Activated CD4-positive, alpha-beta memory T cell treated with anti-CD3 and anti-CD28 coated beads for 36 hours (primary cell): ENCODE measurements at regions of chr17 and their contacts with region 1.

Region 1: DNA sequence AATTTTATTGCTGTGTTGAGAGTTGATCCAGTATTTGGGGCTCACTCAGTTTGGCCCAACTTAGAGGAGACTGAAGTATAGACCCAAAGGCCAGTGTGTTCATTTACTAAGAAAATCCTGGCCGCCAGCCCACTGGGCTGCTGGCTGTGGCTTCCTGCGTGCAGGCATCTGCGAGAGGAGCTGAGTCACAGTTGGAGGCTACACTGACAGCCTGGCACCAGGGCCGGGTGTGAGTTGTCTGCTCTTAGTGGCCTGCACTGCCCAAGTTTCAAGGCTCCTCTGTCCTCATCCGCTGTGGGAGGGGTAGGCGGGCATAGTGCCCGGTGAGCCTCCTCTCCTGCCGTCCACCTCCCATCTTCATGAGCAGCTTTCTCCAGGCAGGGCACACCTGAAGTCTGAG is 54.2 kb downstream of the PLD6 start:
- DNase-seq: peak; percentile 66
- H3K4me3 Mint-ChIP-seq: no peak overlapping the region
- H3K27ac Mint-ChIP-seq: peak overlapping the region; percentile 51
- H3K4me1 Mint-ChIP-seq: peaks cover 60% of the 10 kb centered on the region
- H3K27me3 Mint-ChIP-seq: no peaks in the 10 kb centered on the region

Region 2: DNA sequence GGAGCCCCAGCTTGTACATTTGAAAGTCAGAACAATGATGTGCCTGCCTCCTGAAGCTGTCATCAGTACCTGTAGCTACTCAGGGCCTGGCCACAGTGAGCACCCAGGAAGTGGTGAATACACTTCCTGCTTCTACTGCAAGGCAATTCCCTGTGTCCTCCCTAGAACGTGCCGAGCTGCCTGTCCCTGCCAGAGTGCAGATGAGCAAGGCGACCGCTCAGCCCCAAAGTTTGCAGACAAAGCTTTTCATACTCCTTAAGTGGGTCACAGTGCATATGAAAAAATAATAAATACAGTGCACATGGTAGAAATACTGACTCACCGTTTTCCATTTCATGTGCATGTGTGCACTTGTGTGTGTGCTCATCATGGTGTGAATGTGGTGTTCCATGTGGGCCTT is 32.4 kb before region 1 on chr17:
- CTCF ChIA-PET with region 1: interaction called, 5 read pairs
- POLR2A ChIA-PET with region 1: no interaction called
- intact Hi-C with region 1: loop called (anchors 2 kb)
- DNase-seq: peak; percentile 82
- H3K4me3 Mint-ChIP-seq: peak overlapping the region; percentile 7
- H3K27ac Mint-ChIP-seq: peak overlapping the region; percentile 84
- H3K4me1 Mint-ChIP-seq: peaks cover 69% of the 10 kb centered on the region
- H3K27me3 Mint-ChIP-seq: no peaks in the 10 kb centered on the region

Region 3: DNA sequence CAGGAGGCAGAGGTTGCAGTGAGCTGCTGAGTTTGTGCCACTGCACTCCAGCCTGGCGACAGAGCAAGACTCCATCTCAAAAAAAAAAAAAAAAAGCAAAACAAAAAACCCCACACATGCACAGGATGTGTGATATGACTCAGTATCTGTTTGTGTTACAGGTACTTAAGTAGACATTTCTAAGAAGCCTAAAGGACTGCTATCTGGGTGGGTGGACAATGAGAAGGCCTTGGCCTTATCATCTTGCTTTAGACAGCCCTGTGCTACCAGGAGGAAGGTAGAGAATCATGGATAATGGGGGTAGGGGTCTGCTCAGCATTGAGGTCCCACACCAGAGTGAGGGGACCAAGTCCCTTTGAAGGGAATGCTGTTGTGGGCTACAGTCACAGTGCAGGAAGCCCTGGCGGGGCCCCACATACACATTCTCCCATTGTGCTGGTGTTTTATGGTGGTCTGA is 27.4 kb after region 1 on chr17:
- CTCF ChIA-PET with region 1: interaction called, 3 read pairs
- POLR2A ChIA-PET with region 1: interaction called, 4 read pairs
- intact Hi-C with region 1: loop called (anchors 1 kb)
- DNase-seq: peak; percentile 37
- H3K4me3 Mint-ChIP-seq: peak overlapping the region; percentile 63
- H3K27ac Mint-ChIP-seq: peak overlapping the region; percentile 95
- H3K4me1 Mint-ChIP-seq: peaks cover 83% of the 10 kb centered on the region
- H3K27me3 Mint-ChIP-seq: no peaks in the 10 kb centered on the region

Region 4: GRCh38 chr17:17186051-17186450 is 34.1 kb after region 1 on chr17:
- CTCF ChIA-PET with region 1: no interaction called
- POLR2A ChIA-PET with region 1: interaction called, 4 read pairs
- intact Hi-C with region 1: loop called (anchors 1 kb)
- DNase-seq: peak; percentile 85
- H3K4me3 Mint-ChIP-seq: peak overlapping the region; percentile 16
- H3K27ac Mint-ChIP-seq: peak overlapping the region; percentile 81
- H3K4me1 Mint-ChIP-seq: peaks cover 52% of the 10 kb centered on the region
- H3K27me3 Mint-ChIP-seq: no peaks in the 10 kb centered on the region

Region 5: GRCh38 chr17:17280613-17281549 is 128.9 kb after region 1 on chr17 and contains the start of gene COPS3:
- CTCF ChIA-PET with region 1: no interaction called
- POLR2A ChIA-PET with region 1: no interaction called
- intact Hi-C with region 1: no loop called
- DNase-seq: peak; percentile 98
- H3K4me3 Mint-ChIP-seq: peak within 1 kb of the TSS; percentile 87
- H3K27ac Mint-ChIP-seq: peak within 1 kb of the TSS; percentile 83
- H3K4me1 Mint-ChIP-seq: peaks cover 31% of the 10 kb centered on the region
- H3K27me3 Mint-ChIP-seq: no peaks in the 10 kb centered on the region
- total RNA-seq, gene COPS3: 96.1 to 104 TPM

Region 6: GRCh38 chr17:17303010-17303846 is 151.3 kb after region 1 on chr17 and contains the start of gene NT5M:
- CTCF ChIA-PET with region 1: no interaction called
- POLR2A ChIA-PET with region 1: no interaction called
- intact Hi-C with region 1: loop called (anchors 2 kb)
- DNase-seq: peak; percentile 83
- H3K4me3 Mint-ChIP-seq: peak within 1 kb of the TSS; percentile 84
- H3K27ac Mint-ChIP-seq: peak within 1 kb of the TSS; percentile 75
- H3K4me1 Mint-ChIP-seq: peaks cover 32% of the 10 kb centered on the region
- H3K27me3 Mint-ChIP-seq: no peaks in the 10 kb centered on the region
- total RNA-seq, gene NT5M: 8.5 to 9.3 TPM